Dorsolateral prefrontal cortex (tissue), 120 donors: ENCODE measurements at regions of chr15 and their contacts with region 1.

Region 1: DNA sequence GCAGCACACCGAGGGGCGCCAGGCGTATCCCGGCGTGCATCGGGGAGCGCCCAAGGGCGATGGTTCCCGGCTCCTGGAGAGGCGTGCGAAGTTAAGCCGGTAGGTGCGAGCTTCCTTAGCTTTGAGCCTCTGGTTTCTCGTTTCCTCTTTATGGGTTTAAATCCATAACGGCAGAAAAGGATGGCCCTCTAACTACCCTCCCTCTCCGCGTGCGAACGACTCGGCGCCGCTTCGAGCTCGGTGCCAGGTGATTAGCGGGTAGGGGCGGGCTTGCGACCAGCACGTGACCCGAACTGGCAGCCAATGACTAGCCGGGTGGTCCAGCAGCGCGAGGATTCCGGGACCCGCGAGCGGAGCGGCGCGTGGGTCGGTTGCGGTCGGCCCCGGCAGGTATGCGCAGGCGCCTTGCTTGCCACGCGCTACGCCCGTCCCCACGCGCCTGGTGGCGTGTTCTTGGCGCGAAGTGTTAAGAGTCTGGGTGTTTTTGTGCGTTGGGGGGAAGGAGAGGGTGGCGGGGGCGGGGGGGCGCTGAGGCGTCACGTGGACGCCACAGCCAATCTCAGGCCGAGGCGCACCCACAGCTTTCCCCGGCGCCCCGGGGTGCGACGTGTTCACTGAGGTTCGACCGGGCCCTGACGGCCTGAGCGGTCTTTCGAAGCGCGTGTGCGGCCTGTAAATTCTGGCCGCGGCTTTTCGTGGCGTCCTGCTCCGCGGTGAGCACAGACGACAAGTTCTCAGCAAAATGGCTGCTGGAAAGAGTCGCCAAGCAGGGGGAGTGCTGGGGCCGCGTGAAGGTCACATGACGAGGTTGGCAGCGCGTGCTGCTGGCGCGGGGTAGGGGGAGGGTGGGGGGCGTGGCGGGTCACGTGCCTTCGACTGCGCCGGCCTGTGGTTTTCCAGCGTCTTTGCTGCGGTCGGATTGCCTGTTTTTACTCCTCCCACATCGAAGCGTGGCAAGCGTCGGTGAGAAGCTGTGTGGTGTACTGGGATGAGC is 38.7 kb upstream of the MGA start:
- DNase-seq: peak; percentile 76 to 91 (median 86)
- H3K4me3 ChIP-seq: peak overlapping the region; percentile 37 to 89 (median 73)
- H3K27ac ChIP-seq: peak overlapping the region; percentile 74 to 98 (median 95)
- H3K27me3 ChIP-seq: no peaks in the 10 kb centered on the region
- CTCF ChIP-seq: peak in 12 of 56 donors; percentile 6 to 24 (median 17)

Region 2: GRCh38 chr15:41585127-41586047 is 36.1 kb before region 1 on chr15:
- intact Hi-C with region 1: loop called in 1 of 2 experiments (anchors 5 kb)
- DNase-seq: peak in 9 of 10 donors; percentile 54 to 77 (median 58)
- H3K4me3 ChIP-seq: peak overlapping the region; percentile 10 to 72 (median 56)
- H3K27ac ChIP-seq: peak overlapping the region; percentile 43 to 97 (median 92)
- H3K27me3 ChIP-seq: no peaks in the 10 kb centered on the region
- CTCF ChIP-seq: peak in 49 of 56 donors; percentile 16 to 67 (median 41)

Region 3: DNA sequence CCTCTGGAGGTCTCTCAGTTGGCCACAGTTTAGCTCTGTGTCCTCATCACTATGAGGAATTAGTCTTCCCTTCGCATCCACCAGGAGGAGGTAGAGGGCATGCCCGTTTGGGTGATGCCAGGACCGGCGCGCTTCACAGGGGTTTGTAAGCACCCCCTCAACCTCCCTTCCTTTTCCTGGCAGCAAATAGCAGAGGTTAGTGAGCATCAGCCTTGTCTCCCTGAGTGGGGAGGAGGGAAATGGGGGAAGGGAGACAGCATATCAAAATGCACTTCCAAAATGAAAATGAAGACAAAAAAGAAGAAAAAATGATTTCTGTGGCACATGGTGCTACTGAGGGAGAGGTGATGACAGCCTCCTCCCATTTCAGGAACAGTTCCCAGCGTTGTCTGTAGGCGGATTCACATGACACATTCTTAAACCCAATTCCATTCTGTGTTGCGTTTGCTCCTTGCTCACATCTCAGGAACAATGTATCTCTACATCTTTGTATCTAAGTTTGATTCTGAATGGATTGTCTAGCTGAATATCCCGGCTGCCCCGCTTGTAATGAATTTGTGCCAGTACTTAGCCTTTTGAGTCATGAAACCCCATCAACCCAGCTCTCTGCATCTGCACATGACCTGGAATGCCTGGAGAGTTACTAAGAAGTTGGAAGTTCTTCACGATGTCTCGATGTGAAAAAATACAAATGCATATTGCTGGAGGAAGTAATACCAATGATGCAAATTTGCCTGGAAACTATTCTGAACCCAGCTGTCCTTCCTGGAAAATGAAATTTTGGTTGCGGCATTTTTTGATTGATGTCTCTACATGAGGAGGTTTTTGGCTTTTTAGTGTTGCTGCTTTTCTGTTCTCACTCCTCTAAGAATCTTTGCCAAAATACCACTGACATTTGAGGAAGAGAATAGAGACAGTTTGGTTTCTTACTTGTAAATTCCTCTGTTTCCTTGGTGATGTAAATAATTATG is 17.3 kb before region 1 on chr15:
- intact Hi-C with region 1: loop called in 1 of 2 experiments (anchors 2 kb)
- DNase-seq: peak; percentile 39 to 80 (median 61)
- H3K4me3 ChIP-seq: peak overlapping the region in 55 of 59 donors; percentile 2 to 62 (median 40)
- H3K27ac ChIP-seq: peak overlapping the region in 52 of 59 donors; percentile 3 to 83 (median 54)
- H3K27me3 ChIP-seq: no peaks in the 10 kb centered on the region
- CTCF ChIP-seq: peak; percentile 46 to 86 (median 74)

Region 4: GRCh38 chr15:41660235-41661077 is 39.0 kb after region 1 on chr15 and contains the start of gene MGA:
- intact Hi-C with region 1: loop called (anchors 1 kb)
- DNase-seq: peak; percentile 70 to 89 (median 78)
- H3K4me3 ChIP-seq: peak within 1 kb of the TSS; percentile 43 to 83 (median 69)
- H3K27ac ChIP-seq: peak within 1 kb of the TSS; percentile 29 to 93 (median 83)
- H3K27me3 ChIP-seq: no peaks in the 10 kb centered on the region
- CTCF ChIP-seq: peak in 46 of 56 donors; percentile 11 to 64 (median 42)
- total RNA-seq, gene MGA: 63.5 to 108 (median 82.2) TPM

Region 5: GRCh38 chr15:41774062-41774881 is 152.8 kb after region 1 on chr15 and contains the start of gene MAPKBP1:
- intact Hi-C with region 1: loop called (anchors 10 kb)
- DNase-seq: peak; percentile 94 to 98 (median 96)
- H3K4me3 ChIP-seq: peak within 1 kb of the TSS; percentile 58 to 95 (median 86)
- H3K27ac ChIP-seq: peak within 1 kb of the TSS; percentile 70 to 97 (median 91)
- H3K27me3 ChIP-seq: no peaks in the 10 kb centered on the region
- CTCF ChIP-seq: peak; percentile 57 to 92 (median 76)
- total RNA-seq, gene MAPKBP1: 50.5 to 136 (median 77.6) TPM